GM23248 (cell line): ENCODE measurements at regions of chr9 and their contacts with region 1.

Region 1: DNA sequence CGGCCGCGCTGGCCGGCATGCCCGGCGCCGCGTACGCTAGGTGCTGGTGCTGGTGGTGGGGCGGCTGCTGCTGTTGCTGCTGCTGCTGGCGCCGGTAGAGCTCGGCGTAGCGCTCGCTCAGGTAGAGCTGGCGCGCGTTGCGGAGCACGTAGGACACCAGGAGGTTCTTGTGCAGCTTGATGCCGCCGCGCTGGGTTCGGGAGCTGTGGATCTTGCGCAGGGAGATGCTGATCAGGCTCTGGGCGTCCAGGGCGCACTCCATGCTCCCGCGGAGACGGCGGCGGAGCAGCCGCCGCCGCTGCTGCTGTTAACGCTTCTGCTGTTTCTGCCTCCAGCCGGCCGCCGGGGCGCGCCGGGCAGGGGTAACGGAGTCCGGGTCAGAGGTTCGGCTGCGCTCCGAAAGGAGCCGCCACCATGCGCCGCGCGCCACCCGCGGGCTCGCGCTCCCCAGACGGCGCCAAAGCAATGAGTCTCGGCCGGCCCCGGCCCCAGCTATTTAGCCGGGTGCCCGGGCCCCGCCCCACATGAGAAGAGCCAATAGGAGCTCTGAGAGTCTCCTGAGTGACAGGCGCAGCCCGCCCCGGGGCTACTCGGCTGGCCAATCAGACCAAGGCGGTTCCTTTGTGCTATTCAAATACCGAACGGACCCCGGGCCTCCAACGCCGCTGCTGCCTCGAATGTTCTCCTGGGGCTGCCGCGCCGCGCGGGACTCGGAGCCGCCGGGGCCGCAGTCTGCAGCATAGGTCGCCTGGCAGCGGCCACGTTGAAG is at the start of gene IER5L:
- DNase-seq: peak; percentile 97
- H3K4me3 ChIP-seq: peak within 1 kb of the TSS; percentile 99
- H3K27ac ChIP-seq: peak within 1 kb of the TSS; percentile 97
- H3K4me1 ChIP-seq: peaks cover 9% of the 10 kb centered on the region
- H3K27me3 ChIP-seq: no peaks in the 10 kb centered on the region
- total RNA-seq, gene IER5L: 69.4 and 81.7 TPM in 2 replicates

Region 2: DNA sequence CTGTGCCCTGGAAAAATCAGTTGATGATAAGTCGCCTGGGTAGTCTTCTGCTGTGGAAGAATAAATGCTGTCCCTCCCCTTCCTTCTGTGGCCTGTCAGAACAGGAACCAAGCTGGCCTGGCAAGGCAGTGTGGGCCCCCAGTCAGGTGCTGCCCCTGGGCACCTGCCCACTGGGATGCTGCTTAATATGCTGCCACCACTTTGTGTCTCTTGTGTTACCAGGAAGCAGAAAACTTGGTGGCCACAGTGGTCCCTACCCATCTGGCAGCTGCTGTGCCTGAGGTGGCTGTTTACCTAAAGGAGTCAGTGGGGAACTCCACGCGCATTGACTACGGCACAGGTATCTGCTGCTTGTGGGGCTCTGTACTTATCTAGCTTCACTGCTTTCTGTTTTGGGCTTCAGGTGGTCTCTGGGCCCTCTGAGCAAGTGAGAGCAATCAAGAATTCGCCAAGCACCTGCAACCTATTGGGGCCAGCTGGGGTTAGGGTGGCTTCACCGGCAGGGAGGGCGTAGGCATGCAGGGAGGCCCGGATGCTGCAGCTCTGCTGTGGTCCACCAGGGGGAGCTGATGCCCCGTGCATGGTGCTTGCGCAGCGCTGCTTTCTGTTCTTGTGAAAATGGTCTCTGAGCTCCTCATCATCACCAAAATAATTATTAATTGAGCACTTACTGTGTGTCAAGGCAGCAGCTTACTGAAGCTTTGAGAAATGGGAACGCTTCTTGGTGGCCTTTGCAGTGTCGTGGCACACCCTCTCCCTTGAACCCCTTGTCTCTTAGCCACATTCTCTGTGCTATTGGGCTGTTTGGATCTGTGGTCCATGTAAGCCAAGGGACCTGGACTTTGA is 46.5 kb before region 1 on chr9:
- in situ Hi-C with region 1: no loop called
- DNase-seq: peak; percentile 77
- H3K4me3 ChIP-seq: no peak overlapping the region
- H3K27ac ChIP-seq: no peak overlapping the region
- H3K4me1 ChIP-seq: no peaks in the 10 kb centered on the region
- H3K27me3 ChIP-seq: no peaks in the 10 kb centered on the region

Region 3: GRCh38 chr9:129482521-129483414 is 304.8 kb after region 1 on chr9:
- in situ Hi-C with region 1: loop called (anchors 10 kb)
- DNase-seq: peak; percentile 98
- H3K4me3 ChIP-seq: peak overlapping the region; percentile 63
- H3K27ac ChIP-seq: peak overlapping the region; percentile 100
- H3K4me1 ChIP-seq: peaks cover 56% of the 10 kb centered on the region
- H3K27me3 ChIP-seq: no peaks in the 10 kb centered on the region